ENCODE measurements at regions of chr19 and their contacts with region 1.

Region 1: DNA sequence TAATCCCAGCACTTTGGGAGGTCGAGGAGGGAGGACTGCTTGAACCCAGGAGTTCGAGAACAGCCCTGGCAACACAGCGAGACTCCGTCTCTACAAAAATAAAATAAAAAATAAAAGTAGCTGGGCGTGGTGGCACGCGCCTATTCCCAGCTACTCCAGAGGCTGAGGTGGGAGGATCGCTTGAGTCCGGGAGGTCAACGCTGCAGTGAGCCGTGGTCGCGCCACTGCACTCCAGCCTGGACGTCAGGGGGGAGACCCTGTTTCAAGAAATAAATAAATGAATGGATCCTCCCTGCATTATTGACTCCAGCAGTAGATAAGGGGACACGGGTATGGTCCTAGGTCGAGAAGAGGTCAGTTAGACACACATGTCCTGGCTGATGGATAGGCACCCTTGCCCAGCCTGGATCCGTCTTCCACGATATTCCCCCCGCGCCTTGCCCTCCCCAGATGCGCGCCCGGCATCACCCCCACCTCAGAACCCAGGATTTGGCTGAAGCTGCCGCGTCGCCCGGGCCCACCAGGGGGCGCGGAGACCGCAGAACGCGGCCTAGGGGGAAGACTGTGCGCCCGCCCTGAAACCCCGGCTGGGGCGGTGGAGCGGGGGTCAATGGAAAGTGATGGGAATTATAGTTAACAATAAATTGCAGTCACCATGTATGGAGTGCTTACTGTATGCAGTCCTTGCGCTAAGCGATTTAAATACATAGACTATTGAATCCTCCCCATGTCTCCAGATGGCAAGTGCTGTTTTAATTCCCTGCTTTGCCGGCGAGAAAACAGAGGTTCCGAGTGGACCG is 2.1 kb upstream of the HOOK2 start:
- DNase-seq: peak; percentile 87
- ATAC-seq: peak; percentile 41 to 48

Region 2: GRCh38 chr19:12791238-12792021 is 14.0 kb after region 1 on chr19 and contains the start of gene JUNB:
- intact Hi-C with region 1: loop called (anchors 1 to 2 kb)
- DNase-seq: peak; percentile 99
- ATAC-seq: peak; percentile 65
- total RNA-seq, gene JUNB: 46.6 to 216 TPM